ENCODE measurements at regions of chr11 and their contacts with region 1.

Region 1: GRCh38 chr11:85867751-85868150 is 12.6 kb downstream of the CCDC83 start:
- DNase-seq: no peak
- H3K4me3 ChIP-seq: no peak overlapping the region
- H3K27ac ChIP-seq: no peak overlapping the region
- H3K4me1 ChIP-seq: no peaks in the 10 kb centered on the region
- H3K27me3 ChIP-seq: no peaks in the 10 kb centered on the region
- CTCF ChIP-seq: no peak

Region 2: DNA sequence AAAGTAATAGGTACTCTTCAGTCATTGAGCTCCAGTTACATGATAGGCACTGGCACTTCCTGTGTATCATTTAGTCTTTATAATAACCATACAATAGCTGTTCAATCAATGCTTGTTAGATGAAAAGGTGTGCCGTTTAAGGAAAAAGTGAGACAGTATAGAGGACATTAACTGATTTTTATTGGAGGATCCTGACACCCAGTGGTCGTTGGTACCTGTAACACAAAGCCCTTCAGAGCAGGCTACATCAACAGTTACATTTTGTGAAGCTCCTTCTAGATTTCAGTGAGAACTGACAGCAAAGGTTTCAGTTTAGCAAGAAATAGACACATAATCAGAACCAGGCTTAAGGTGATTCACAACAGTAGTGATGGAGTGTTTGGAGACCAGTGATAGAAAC is 551.2 kb after region 1 on chr11:
- CTCF ChIA-PET with region 1: no interaction called
- POLR2A ChIA-PET with region 1: no interaction called
- intact Hi-C with region 1: loop called (anchors 10 kb)
- DNase-seq: peak; percentile 18
- H3K4me3 ChIP-seq: no peak overlapping the region
- H3K27ac ChIP-seq: no peak overlapping the region
- H3K4me1 ChIP-seq: no peaks in the 10 kb centered on the region
- H3K27me3 ChIP-seq: no peaks in the 10 kb centered on the region
- CTCF ChIP-seq: peak; percentile 41